Ovary (tissue), 10 donors: ENCODE measurements at regions of chr16 and their contacts with region 1.

Region 1: DNA sequence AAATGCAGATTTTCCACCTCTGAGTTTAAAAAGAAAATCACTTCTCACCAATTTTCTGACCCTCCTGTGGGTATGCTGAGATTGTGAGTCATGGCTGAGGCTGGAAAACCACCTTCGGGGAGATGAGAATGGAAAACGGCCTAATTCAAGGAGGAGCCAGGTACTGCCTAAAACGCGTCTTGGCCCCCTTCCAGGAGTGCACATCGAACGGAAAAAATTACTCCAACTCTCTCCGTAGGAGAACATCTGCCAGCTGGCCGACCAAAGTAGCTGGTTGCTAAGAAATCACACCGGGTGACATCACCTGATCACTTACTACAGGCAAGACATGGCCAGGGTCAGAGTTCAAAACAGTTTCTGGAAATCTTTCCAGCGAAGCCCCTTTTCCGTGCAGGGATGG is 107.6 kb downstream of the ZNF423 start:
- DNase-seq: peak in 4 of 5 donors; percentile 38 to 52 (median 48)
- H3K4me3 ChIP-seq: no peak overlapping the region
- H3K27ac ChIP-seq: no peak overlapping the region
- H3K4me1 ChIP-seq: no peaks in the 10 kb centered on the region
- H3K27me3 ChIP-seq: no peaks in the 10 kb centered on the region
- CTCF ChIP-seq: no peak
- EP300 ChIP-seq: no peak
- POLR2A ChIP-seq: no peak

Region 2: GRCh38 chr16:49652456-49653172 is 95.7 kb before region 1 on chr16:
- intact Hi-C with region 1: loop called in 1 of 4 experiments (anchors 10 kb)
- DNase-seq: peak; percentile 66 to 82 (median 74)
- H3K4me3 ChIP-seq: peak overlapping the region; percentile 10
- H3K27ac ChIP-seq: peak overlapping the region in 1 of 2 donors; percentile 74
- H3K4me1 ChIP-seq: peaks cover 7% of the 10 kb centered on the region
- H3K27me3 ChIP-seq: no peaks in the 10 kb centered on the region
- CTCF ChIP-seq: no peak
- EP300 ChIP-seq: no peak
- POLR2A ChIP-seq: no peak

Region 3: DNA sequence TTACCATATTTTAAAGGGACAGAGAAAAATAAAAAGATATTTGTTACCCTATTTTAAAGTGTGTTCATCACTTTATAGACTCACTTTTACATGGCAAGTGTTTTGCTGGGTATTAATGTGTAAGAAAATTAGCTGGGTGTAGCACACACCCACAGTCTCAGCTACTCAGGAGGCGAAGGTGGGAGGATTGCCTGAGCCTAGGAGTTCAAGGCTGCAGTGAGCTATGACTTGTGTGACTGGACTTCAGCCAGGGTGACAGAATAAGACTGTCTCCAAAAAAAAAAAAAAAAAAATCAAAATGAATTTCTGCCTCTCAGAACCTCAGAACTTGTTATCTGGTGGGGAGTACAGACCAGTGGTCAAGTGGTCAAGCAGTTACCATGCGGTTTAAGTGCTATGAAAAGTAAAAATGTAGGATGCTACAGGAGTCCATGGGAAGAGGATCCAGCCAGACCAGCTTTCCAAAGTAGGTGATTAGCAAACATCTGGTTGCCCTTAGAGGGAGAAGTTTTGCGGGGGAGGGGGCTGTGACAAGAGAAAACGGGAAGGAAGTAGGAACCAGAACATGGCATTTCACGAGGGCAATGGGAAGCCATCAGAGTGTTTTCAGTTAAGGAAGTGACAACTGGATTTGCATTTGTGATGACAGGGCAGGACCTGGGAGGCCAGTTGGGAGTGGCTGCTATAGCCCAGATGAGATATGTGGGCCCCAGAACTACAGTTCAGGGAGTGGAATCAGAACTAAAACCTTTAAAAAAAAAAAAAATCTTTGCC is 290.6 kb after region 1 on chr16:
- intact Hi-C with region 1: no loop called
- DNase-seq: peak in 1 of 5 donors; percentile 22
- H3K4me3 ChIP-seq: no peak overlapping the region
- H3K27ac ChIP-seq: no peak overlapping the region
- H3K4me1 ChIP-seq: no peaks in the 10 kb centered on the region
- H3K27me3 ChIP-seq: no peaks in the 10 kb centered on the region
- CTCF ChIP-seq: no peak
- EP300 ChIP-seq: no peak
- POLR2A ChIP-seq: no peak